Activated CD4-positive, alpha-beta T cell treated with anti-CD3 and anti-CD28 coated beads, Interleukin-2, amount 10 ng/mL, durations not matched to agents 24 days and 14 days (primary cell): ENCODE measurements at regions of chr15 and their contacts with region 1.

Region 1: DNA sequence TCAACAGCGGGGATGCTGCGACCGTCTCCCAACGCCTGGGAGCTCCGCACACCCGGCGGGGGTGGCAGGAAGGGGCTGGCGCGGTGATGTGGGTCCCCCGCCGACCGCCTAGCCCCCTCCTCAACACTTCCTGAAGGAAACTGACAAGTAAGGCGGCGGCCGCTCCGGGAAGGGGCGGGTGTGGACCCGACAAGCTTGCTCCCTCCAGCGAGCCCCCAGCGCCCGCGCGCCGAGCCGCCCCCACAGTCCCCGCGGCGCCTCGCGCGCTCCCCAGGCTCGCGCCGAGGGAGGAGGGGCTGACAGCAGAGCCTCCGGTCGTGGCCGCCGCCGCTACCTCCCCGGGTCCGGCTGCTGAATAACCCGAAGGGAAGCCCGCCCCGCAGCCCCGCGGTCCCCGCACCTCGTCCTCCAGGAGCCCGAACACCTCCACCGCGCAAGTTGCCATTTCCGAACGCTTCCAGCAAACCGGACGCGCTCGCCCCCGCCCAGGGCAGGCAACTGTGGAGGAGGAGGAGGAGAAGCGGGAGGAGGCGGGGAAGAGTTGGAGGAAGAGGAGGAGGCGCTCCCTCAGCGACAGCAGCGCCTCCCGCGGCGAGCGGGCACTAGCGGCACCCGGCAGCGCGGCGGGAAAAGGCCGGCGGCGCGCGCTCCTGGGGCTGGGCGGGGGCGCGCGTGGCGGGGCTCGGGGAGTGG is at the start of gene NEDD4:
- DNase-seq: peak; percentile 93
- H3K4me3 Mint-ChIP-seq: peak within 1 kb of the TSS; percentile 89
- H3K27ac Mint-ChIP-seq: peak within 1 kb of the TSS; percentile 76
- H3K4me1 Mint-ChIP-seq: peaks cover 24% of the 10 kb centered on the region
- H3K27me3 Mint-ChIP-seq: peaks cover 38% of the 10 kb centered on the region
- total RNA-seq, gene NEDD4: 9.5 and 10.7 TPM in 2 replicates

Region 2: DNA sequence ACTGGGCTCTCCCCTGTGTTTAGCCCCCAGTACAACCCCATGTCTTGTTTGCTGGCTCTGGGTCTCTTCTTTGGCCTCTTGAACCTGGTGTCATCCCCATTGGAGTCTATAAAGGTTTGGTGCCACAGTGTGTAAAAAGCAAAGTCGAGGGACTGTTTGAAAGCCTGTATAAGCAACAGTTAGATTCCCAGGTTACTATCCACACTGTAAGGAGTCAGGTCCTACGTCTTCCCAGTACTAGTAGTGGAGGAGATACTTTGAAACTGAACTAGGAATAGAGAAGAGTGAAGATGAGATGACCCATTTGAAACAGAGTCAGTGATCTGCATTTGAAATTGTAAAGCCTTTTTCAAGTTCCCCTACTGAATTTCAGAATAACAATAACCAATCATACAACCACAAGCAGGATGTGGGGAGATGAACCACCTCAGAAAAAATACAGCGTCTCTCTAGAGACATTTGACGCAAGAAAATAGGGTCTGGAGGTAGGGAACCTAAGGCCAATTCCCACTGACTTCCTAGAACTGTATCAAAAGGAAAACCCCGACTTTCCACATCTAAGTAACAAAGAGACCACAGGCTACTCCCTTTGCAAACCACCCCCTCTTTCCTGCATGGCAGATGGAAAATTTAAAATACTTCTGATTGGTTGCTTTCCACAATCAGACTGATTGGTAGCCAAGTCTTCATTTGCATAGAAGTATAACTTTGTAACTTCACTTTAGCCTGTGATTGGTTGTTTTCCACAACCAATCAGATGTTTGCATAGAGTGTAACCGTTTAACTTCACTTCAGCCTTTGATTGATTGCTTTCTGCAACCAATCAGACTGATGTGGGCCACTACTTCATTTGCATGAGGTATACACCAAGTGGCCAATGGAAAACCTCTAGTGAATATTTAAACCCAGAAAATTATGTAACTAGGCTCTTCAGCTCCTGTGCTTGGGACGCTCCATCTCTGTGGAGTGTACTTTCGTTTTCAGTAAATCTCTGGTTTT is 50.0 kb after region 1 on chr15:
- intact Hi-C with region 1: loop called (anchors 1 kb)
- DNase-seq: peak; percentile 89
- H3K4me3 Mint-ChIP-seq: peak overlapping the region; percentile 65
- H3K27ac Mint-ChIP-seq: peak overlapping the region; percentile 68
- H3K4me1 Mint-ChIP-seq: peaks cover 30% of the 10 kb centered on the region
- H3K27me3 Mint-ChIP-seq: peaks cover 2% of the 10 kb centered on the region

Region 3: DNA sequence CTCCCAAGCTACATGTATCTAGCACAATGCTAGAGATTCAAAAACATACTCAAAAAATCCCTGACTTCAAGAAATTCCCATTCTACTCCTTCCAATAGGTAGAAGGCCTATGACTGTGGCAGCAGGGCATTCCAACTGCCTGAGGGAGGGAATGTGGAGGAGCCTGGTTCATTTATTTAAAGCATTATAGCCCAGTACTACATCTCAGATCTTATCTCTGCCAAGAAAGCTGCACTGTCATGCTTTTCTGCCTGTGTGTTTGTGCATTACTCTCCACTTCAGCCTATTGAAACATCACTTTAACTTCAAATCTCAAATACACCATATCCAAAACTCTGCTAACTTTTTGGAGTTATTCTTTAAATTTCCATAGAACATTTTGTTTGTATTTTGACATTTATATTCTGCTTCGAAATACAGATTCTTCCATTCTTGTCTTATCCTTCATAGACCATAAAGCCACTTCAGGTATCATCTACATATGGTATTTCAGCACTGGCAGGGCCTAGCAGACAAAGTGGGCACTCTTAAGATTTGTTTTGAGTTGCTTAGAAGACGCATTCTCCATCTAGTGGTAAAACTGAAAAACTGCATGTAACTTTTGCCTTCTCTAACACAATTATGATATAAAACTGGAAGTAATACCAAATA is 59.3 kb after region 1 on chr15:
- intact Hi-C with region 1: loop called (anchors 2 kb)
- DNase-seq: no peak
- H3K4me3 Mint-ChIP-seq: no peak overlapping the region
- H3K27ac Mint-ChIP-seq: no peak overlapping the region
- H3K4me1 Mint-ChIP-seq: peaks cover 3% of the 10 kb centered on the region
- H3K27me3 Mint-ChIP-seq: peaks cover 2% of the 10 kb centered on the region